ENCODE measurements at regions of chr13 and their contacts with region 1.

Region 1: DNA sequence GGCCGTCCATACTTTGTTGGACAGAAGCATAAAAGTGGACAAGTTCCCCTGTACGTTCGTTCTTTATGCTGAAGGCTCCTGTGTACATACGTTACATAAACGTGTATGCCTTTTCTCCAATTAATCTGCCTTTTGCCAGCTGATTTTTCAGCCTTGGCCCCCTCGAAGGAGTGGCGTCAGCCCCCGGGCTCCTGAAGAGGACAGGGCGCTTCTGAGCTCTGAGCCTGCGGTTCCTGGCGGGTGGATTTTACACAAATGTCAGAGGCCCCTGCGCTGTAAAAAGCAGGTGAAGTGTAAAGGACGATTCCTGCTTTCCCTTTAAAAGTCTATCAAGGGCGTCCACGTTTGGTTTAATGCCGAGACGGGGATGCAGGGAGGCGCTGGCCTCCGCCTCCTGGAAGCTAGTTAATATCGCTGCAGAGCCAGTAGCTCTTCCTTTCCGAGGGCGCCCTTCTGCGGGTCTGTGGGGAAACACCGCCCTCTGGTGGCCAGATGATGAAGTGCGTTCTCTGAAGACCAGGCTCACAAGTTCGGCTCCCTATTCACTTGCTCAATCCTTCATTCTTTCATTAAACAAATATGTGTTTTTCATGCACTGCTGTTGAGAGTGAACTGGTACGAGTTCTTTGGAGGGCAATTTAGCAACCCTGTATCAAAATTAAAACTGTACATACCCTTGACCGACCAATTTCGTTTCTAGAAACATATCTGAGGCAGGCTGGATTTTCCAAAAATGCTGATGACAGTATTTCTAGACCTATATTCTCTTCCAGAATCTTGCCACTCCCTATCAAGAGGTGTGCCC is 62.0 kb downstream of the GPR12 start:
- DNase-seq: peak; percentile 81
- ATAC-seq: peak; percentile 97
- H3K4me3 ChIP-seq: no peak overlapping the region
- H3K27ac ChIP-seq: no peak overlapping the region
- H3K4me1 ChIP-seq: no peaks in the 10 kb centered on the region
- H3K27me3 ChIP-seq: no peaks in the 10 kb centered on the region
- CTCF ChIP-seq: peak; percentile 98
- POLR2A ChIP-seq: peak; percentile 61
- RAD21 ChIP-seq: peak; percentile 100

Region 2: DNA sequence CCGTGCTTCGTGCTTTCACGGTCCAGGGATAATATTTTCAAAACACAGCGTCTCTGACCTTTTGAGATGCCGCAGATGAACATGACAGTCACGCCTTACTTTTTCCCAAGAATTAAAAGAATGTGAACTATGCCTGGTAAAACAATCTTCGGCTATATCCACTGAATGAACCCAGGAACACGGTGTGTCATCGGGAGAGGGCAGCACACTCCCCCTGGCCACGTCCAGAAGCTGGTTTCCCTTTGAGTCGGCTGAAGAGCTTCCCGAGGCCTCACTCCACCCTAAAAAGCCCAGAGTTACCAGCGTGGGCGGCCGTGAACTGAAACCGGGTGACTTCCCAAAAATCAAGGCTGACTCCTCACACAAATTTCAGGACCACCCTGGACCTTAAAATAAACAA is 623.9 kb before region 1 on chr13:
- CTCF ChIA-PET with region 1: no interaction called
- POLR2A ChIA-PET with region 1: no interaction called
- dilution Hi-C with region 1: no loop called
- in situ Hi-C with region 1: no loop called
- intact Hi-C with region 1: loop called (anchors 10 kb)
- DNase-seq: peak; percentile 14
- ATAC-seq: peak; percentile 82
- H3K4me3 ChIP-seq: no peak overlapping the region
- H3K27ac ChIP-seq: no peak overlapping the region
- H3K4me1 ChIP-seq: no peaks in the 10 kb centered on the region
- H3K27me3 ChIP-seq: peaks cover 1% of the 10 kb centered on the region; the same call in 1 of the 2 replicates
- CTCF ChIP-seq: 0 out of 2 replicates have a peak, but pooled peaks have one; percentile 9
- POLR2A ChIP-seq: no peak
- RAD21 ChIP-seq: no peak

Region 3: DNA sequence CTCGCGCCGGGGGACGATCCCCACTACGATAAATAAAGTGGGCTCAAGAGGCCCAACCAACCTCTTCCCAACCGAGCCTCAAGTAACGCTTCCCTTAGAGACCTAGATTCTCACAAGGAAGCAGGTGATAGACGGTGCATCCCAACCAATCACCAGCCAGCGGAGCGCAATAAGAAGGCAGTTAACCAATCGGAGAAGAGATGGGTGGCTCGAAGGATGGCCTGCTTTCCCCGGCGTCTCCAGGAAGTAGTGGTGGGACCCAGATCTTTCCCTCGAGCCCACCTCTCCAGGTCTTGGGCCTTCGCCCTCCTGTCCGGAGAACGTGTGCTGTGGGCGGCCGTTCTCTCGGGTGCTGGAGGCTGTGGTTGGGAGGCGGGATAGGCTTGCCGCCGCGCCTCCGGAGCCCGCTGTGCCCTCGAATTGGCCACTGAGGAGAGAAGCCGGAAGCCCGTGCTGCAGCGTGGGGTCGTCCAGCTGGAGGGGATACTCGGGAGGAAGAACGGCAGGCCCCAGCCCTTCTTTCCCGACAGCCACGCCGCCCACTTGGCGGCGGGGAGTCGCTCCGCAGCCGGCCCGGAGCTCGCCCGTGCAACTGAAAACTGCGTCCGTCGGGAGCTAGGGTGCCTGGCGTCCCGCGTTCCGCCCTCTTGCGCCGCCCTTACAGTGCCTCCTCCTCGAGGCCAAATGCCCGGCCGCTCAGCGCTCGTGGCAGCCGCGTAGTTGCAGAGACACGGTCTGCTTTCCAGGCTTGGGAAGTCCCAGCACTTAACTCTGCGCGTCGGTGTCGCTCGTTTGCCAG is 476.7 kb before region 1 on chr13 and contains the start of gene RNF6:
- CTCF ChIA-PET with region 1: no interaction called
- POLR2A ChIA-PET with region 1: no interaction called
- dilution Hi-C with region 1: no loop called
- in situ Hi-C with region 1: no loop called
- intact Hi-C with region 1: loop called (anchors 1 kb)
- DNase-seq: peak; percentile 99
- ATAC-seq: peak; percentile 98
- H3K4me3 ChIP-seq: peak within 1 kb of the TSS; percentile 67
- H3K27ac ChIP-seq: peak within 1 kb of the TSS; percentile 96
- H3K4me1 ChIP-seq: 0 out of 2 replicates have a peak, but pooled peaks cover 2% of the 10 kb centered on the region
- H3K27me3 ChIP-seq: no peaks in the 10 kb centered on the region; the same call in 1 of the 2 replicates
- CTCF ChIP-seq: no peak
- POLR2A ChIP-seq: peak; percentile 72
- RAD21 ChIP-seq: no peak
- total RNA-seq, gene RNF6: 33.3 and 51.1 TPM in 2 replicates

Region 4: GRCh38 chr13:26390203-26390602 is 308.4 kb before region 1 on chr13:
- CTCF ChIA-PET with region 1: no interaction called
- POLR2A ChIA-PET with region 1: no interaction called
- dilution Hi-C with region 1: no loop called
- in situ Hi-C with region 1: no loop called
- intact Hi-C with region 1: no loop called
- DNase-seq: no peak
- ATAC-seq: no peak
- H3K4me3 ChIP-seq: no peak overlapping the region
- H3K27ac ChIP-seq: no peak overlapping the region
- H3K4me1 ChIP-seq: no peaks in the 10 kb centered on the region
- H3K27me3 ChIP-seq: no peaks in the 10 kb centered on the region
- CTCF ChIP-seq: no peak
- POLR2A ChIP-seq: no peak
- RAD21 ChIP-seq: no peak

Region 5: DNA sequence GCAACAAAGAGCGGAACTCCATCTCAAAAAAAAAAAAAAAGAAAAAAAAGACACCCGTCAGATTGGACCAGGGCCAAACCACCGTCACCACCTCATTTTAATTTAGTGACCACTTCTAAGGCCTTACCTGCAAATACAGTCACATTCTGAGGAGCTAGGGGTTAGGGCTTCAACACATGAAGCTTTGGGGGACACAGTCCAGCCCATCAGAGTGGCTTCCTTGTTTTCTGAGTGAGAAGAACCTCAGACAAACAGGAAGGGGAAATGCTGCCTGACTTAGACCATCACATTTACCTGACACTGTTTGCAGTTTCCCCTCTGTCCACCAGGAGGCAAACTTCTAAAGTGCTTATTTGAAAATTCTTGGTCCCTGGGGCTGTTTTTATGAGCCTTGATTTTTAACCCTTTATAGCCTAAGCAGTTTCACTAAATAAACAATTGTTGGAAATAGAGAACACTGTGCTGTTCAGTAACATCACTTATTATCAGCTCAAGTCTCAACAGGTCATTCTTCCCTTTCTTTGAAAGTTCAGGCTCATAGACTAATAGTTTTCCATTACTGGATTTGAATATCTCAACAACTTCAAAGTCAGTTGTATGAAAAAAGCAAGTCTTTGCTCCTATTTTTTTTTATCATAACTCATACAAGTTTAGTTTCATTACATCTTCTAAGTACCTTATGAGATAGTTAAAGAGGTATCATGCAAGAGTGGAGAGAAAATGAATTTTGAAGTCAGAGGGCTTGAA is 216.0 kb before region 1 on chr13:
- CTCF ChIA-PET with region 1: interaction called, 6 read pairs
- POLR2A ChIA-PET with region 1: no interaction called
- dilution Hi-C with region 1: no loop called
- in situ Hi-C with region 1: loop called (anchors 5 kb)
- intact Hi-C with region 1: loop called (anchors 1 kb)
- DNase-seq: peak; percentile 74
- ATAC-seq: peak; percentile 81
- H3K4me3 ChIP-seq: no peak overlapping the region
- H3K27ac ChIP-seq: no peak overlapping the region
- H3K4me1 ChIP-seq: peaks cover 4% of the 10 kb centered on the region
- H3K27me3 ChIP-seq: no peaks in the 10 kb centered on the region; the same call in 1 of the 2 replicates
- CTCF ChIP-seq: peak; percentile 84
- POLR2A ChIP-seq: no peak
- RAD21 ChIP-seq: peak; percentile 76

Region 6: GRCh38 chr13:26557393-26558023 is 141.1 kb before region 1 on chr13 and contains the start of gene WASF3:
- CTCF ChIA-PET with region 1: no interaction called
- POLR2A ChIA-PET with region 1: no interaction called
- dilution Hi-C with region 1: no loop called
- in situ Hi-C with region 1: no loop called
- intact Hi-C with region 1: loop called (anchors 5 kb)
- DNase-seq: peak; percentile 90
- ATAC-seq: peak; percentile 95
- H3K4me3 ChIP-seq: peak within 1 kb of the TSS; percentile 83
- H3K27ac ChIP-seq: peak within 1 kb of the TSS; percentile 72
- H3K4me1 ChIP-seq: peaks cover 16% of the 10 kb centered on the region
- H3K27me3 ChIP-seq: peaks cover 7% of the 10 kb centered on the region
- CTCF ChIP-seq: no peak
- POLR2A ChIP-seq: peak; percentile 67
- RAD21 ChIP-seq: 0 out of 2 replicates have a peak, but pooled peaks have one; percentile 4
- total RNA-seq, gene WASF3: 4.3 and 5.8 TPM in 2 replicates